ENCODE measurements at regions of chr12 and their contacts with region 1.

Region 1: DNA sequence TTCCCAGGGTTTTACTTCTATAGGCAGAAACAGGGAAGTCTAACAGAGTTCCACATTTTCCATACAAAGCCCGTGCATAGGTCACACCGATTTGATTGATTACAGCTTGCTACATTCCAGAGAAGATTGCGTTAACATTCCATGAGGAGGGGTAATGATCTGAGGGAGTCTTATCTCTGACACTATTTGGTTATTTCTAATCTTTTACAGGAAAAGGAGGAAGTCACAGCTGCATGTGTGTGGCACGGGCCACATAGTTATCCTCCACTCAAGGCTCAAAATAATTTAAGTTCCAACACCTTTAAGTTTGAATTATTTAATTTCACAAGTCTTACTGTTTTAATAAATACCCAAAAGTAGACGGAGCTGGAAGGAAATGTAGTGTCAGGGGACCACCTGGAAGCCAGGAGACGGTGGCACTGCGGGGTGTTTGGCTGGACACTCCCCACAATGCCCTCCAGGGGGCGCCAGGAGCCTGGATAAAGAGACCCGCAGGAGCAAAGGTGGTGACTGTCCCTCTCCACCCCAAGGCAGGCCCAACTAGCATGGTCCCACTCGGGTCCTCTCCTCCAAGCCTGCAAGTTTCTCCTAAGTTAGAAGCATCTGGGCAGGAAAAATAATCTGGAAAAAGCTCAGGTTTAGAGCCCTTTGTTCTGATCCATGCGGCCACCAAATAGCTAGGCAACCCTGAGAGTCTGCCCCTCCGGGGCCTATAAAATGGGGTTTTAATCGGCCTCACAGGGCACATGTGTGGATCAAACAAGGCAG is 20.2 kb downstream of the KRT8 start:
- DNase-seq: peak; percentile 93
- H3K4me3 Mint-ChIP-seq: no peak overlapping the region
- H3K27ac Mint-ChIP-seq: no peak overlapping the region
- H3K4me1 Mint-ChIP-seq: peaks cover 6% of the 10 kb centered on the region
- H3K27me3 Mint-ChIP-seq: peaks cover 14% of the 10 kb centered on the region

Region 2: GRCh38 chr12:52980693-52981423 is 96.1 kb after region 1 on chr12:
- intact Hi-C with region 1: loop called (anchors 1 kb)
- DNase-seq: peak; percentile 94
- H3K4me3 Mint-ChIP-seq: no peak overlapping the region
- H3K27ac Mint-ChIP-seq: no peak overlapping the region
- H3K4me1 Mint-ChIP-seq: no peaks in the 10 kb centered on the region
- H3K27me3 Mint-ChIP-seq: peaks cover 28% of the 10 kb centered on the region